Body of pancreas (tissue), 4 donors: ENCODE measurements at regions of chr2 and their contacts with region 1.

Region 1: GRCh38 chr2:68467077-68467960 is at the starts of genes APLF and FBXO48:
- DNase-seq: peak; percentile 98 to 99 (median 98)
- ATAC-seq: peak; percentile 97
- H3K4me3 ChIP-seq: peak within 1 kb of the TSS; percentile 74 to 90
- H3K27ac ChIP-seq: peak within 1 kb of the TSS; percentile 64 to 89 (median 84)
- H3K4me1 ChIP-seq: peaks cover 16% of the 10 kb centered on the region
- H3K27me3 ChIP-seq: no peaks in the 10 kb centered on the region
- CTCF ChIP-seq: no peak
- POLR2A ChIP-seq: peak; percentile 68 to 84 (median 79)
- total RNA-seq, gene APLF: 3.9 to 4.0 TPM
- total RNA-seq, gene FBXO48: 0.78 to 3.0 TPM

Region 2: GRCh38 chr2:68715353-68716041 is 248.2 kb after region 1 on chr2:
- intact Hi-C with region 1: loop called (anchors 5 kb)
- DNase-seq: peak; percentile 71 to 78 (median 74)
- ATAC-seq: peak; percentile 87
- H3K4me3 ChIP-seq: no peak overlapping the region
- H3K27ac ChIP-seq: peak overlapping the region in 1 of 4 donors; percentile 51
- H3K4me1 ChIP-seq: no peaks in the 10 kb centered on the region
- H3K27me3 ChIP-seq: no peaks in the 10 kb centered on the region
- CTCF ChIP-seq: peak; percentile 66 to 86 (median 71)
- POLR2A ChIP-seq: no peak